Right cardiac atrium (tissue), 5 donors: ENCODE measurements at regions of chr6 and their contacts with region 1.

Region 1: DNA sequence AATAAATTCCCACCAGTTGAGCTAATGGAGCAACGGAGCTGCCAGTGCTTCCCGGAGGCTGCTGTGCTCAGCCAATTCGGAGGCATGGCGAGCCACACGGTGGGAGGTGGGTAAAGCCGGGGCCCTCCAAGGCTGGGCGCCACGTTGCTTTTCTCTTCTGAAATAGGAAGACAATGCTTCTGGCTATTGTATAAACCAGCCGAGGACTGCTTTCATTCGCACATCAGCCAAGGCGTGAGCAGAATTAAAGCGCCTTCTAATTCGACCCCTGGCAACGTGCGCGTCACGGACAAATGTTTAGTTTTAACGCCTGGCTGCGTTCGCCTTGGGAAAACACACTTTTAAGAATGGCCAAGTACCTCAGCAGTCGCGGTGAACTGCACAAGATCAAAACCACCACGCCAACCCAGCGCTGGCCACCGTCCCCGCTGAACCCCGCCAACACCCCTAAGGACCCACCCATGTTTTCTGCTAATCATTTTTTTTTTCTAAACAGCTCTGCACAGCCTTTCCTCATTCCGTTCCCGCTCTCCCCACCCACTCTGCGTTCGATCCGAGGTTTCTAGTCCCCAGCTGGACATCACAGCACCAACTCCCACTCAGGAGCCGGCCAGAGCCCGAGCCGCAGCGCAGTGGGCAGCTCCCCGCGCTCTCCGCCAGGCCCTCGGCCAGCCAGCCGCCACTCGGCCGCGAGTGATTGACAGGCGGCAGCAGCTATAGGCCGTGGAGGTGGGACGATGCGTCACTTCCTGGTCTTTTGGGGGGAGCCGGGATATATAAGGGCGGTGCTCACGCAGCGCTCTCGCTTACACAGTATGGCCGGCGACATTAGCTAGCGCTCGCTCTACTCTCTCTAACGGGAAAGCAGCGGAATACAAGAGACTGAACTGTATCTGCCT is at the start of gene AMD1:
- DNase-seq: peak; percentile 98 to 99 (median 99)
- ATAC-seq: peak; percentile 94 to 96
- H3K4me3 ChIP-seq: peak within 1 kb of the TSS; percentile 96
- H3K27ac ChIP-seq: peak within 1 kb of the TSS; percentile 88
- H3K4me1 ChIP-seq: no peaks in the 10 kb centered on the region
- H3K27me3 ChIP-seq: no peaks in the 10 kb centered on the region
- total RNA-seq, gene AMD1: 58.0 to 65.2 (median 63.2) TPM

Region 2: DNA sequence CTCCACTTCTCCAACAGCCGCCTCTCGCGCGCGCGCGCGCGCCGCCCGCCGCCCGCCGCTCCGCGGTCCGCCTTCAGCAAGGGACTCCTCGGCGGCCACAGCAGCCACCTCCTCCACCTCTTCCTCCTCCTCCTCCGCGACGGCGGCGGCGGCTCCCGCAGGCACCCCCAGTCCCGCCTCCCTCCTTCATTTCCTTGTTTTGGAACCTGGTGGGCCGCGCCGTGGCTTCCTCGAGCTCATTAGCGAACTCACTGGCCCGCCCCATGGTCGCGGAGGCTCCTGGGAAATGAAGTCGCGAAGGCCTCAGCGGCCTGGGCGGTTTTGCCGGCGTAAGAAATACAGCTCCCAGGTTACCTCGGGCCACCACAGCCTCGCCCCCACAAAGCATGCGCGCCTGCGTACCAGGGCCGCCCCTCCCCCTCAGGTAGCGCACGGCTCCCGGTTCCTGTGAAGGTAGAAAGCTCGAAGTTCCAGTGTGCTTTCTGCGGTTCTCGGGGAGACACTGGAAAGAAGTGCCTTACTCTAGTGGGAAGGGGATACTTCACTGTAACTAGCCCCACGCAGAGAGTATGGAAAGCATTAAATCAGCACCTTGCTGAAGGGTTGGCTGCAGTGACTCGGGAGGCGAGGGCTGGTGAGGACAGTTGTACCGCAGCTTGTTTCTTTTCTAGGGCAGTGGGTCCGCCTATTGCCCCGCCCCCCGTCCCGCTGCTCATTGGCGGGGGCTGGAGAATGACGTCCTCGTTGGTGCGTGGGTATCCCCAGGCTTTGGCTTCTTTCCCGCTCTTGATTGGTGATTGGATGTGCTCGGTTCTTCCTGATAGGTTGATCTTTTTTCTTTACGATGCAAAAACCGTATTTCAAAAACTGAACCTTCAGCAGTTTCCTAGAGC is 58.8 kb before region 1 on chr6 and contains the start of gene CDK19:
- intact Hi-C with region 1: loop called in 2 of 4 experiments (anchors 5 to 10 kb)
- DNase-seq: peak; percentile 98 to 99 (median 99)
- ATAC-seq: peak; percentile 98 to 99
- H3K4me3 ChIP-seq: peak within 1 kb of the TSS; percentile 74
- H3K27ac ChIP-seq: peak within 1 kb of the TSS; percentile 95
- H3K4me1 ChIP-seq: peaks cover 2% of the 10 kb centered on the region
- H3K27me3 ChIP-seq: no peaks in the 10 kb centered on the region
- total RNA-seq, gene CDK19: 7.5 to 10.8 (median 9.9) TPM

Region 3: DNA sequence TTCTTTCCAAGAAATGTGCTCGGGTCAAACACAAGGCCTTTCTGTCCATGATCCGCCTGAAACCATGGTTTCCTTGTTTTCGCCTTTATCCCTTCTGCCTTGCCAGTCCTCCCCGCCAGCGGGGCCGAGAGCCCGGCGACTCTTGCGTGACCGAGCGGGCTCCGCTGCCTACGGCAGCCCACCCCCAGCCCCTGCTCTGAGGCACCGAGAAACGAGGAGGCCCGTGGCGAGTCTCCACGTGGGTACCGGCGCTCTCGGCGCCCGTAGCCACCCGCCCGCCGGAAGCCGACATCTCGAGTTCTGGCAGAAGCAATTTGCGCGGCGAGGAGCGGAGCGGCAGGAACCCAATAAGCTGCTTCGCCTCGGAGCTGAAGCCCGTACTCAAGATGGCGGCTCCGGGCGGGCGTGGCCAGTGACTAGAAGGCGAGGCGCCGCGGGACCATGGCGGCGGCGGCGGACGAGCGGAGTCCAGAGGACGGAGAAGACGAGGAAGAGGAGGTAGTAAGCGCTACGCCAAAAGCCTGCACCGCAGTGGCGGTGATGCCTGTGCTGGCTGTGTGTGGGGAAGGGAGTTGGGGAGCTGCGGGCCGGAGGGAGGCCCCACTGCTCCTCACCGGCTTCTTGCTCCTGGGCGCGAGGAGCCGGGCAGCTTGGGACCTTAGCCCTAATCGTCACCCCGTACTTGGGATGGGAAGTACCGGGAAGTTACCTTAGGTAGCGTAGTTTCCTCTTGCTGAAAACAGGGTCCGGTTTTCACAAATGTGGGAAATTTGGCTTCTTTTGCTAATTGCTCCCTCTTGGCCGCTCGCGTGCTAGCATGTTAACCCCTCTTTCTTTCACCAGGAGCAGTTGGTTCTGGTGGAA is 84.3 kb after region 1 on chr6 and contains the start of gene GTF3C6:
- intact Hi-C with region 1: loop called in 2 of 4 experiments (anchors 5 to 10 kb)
- DNase-seq: peak; percentile 95 to 98 (median 97)
- ATAC-seq: peak; percentile 99 to 100
- H3K4me3 ChIP-seq: peak within 1 kb of the TSS; percentile 76
- H3K27ac ChIP-seq: peak within 1 kb of the TSS; percentile 91
- H3K4me1 ChIP-seq: no peaks in the 10 kb centered on the region
- H3K27me3 ChIP-seq: no peaks in the 10 kb centered on the region
- total RNA-seq, gene GTF3C6: 83.0 to 98.5 (median 86.5) TPM